Activated CD4-positive, alpha-beta T cell treated with anti-CD3 and anti-CD28 coated beads for 36 hours (primary cell): ENCODE measurements at regions of chr2 and their contacts with region 1.

Region 1: GRCh38 chr2:25822190-25823117 is 55.8 kb downstream of the ASXL2 start:
- DNase-seq: peak; percentile 82
- ATAC-seq: peak; percentile 34
- H3K4me3 Mint-ChIP-seq: peak overlapping the region; percentile 72
- H3K27ac Mint-ChIP-seq: peak overlapping the region; percentile 79
- H3K4me1 Mint-ChIP-seq: peaks cover 69% of the 10 kb centered on the region
- H3K27me3 Mint-ChIP-seq: no peaks in the 10 kb centered on the region

Region 2: GRCh38 chr2:25586726-25587144 is 235.7 kb before region 1 on chr2:
- CTCF ChIA-PET with region 1: no interaction called
- POLR2A ChIA-PET with region 1: no interaction called
- intact Hi-C with region 1: loop called in 1 of 2 experiments (anchors 2 kb)
- DNase-seq: peak; percentile 65
- ATAC-seq: peak; percentile 88
- H3K4me3 Mint-ChIP-seq: no peak overlapping the region
- H3K27ac Mint-ChIP-seq: peak overlapping the region; percentile 68
- H3K4me1 Mint-ChIP-seq: peaks cover 18% of the 10 kb centered on the region
- H3K27me3 Mint-ChIP-seq: no peaks in the 10 kb centered on the region

Region 3: GRCh38 chr2:25794544-25795276 is 27.7 kb before region 1 on chr2:
- CTCF ChIA-PET with region 1: interaction called, 12 read pairs
- POLR2A ChIA-PET with region 1: interaction called, 8 read pairs
- intact Hi-C with region 1: loop called (anchors 1 kb)
- DNase-seq: peak; percentile 22
- ATAC-seq: peak; percentile 60
- H3K4me3 Mint-ChIP-seq: peak overlapping the region; percentile 60
- H3K27ac Mint-ChIP-seq: peak overlapping the region; percentile 84
- H3K4me1 Mint-ChIP-seq: peaks cover 83% of the 10 kb centered on the region
- H3K27me3 Mint-ChIP-seq: no peaks in the 10 kb centered on the region

Region 4: GRCh38 chr2:25833566-25833965 is 11.1 kb after region 1 on chr2:
- CTCF ChIA-PET with region 1: interaction called, 6 read pairs
- POLR2A ChIA-PET with region 1: interaction called, 10 read pairs
- intact Hi-C with region 1: loop called in 1 of 2 experiments (anchors 1 kb)
- DNase-seq: peak; percentile 40
- ATAC-seq: no peak
- H3K4me3 Mint-ChIP-seq: no peak overlapping the region
- H3K27ac Mint-ChIP-seq: peak overlapping the region; percentile 26
- H3K4me1 Mint-ChIP-seq: peaks cover 57% of the 10 kb centered on the region
- H3K27me3 Mint-ChIP-seq: no peaks in the 10 kb centered on the region

Region 5: GRCh38 chr2:25903216-25903776 is 80.8 kb after region 1 on chr2:
- CTCF ChIA-PET with region 1: no interaction called
- POLR2A ChIA-PET with region 1: no interaction called
- intact Hi-C with region 1: no loop called
- DNase-seq: no peak
- ATAC-seq: peak; percentile 23
- H3K4me3 Mint-ChIP-seq: no peak overlapping the region
- H3K27ac Mint-ChIP-seq: no peak overlapping the region
- H3K4me1 Mint-ChIP-seq: no peaks in the 10 kb centered on the region
- H3K27me3 Mint-ChIP-seq: no peaks in the 10 kb centered on the region